ENCODE measurements at regions of chr10 and their contacts with region 1.

Region 1: DNA sequence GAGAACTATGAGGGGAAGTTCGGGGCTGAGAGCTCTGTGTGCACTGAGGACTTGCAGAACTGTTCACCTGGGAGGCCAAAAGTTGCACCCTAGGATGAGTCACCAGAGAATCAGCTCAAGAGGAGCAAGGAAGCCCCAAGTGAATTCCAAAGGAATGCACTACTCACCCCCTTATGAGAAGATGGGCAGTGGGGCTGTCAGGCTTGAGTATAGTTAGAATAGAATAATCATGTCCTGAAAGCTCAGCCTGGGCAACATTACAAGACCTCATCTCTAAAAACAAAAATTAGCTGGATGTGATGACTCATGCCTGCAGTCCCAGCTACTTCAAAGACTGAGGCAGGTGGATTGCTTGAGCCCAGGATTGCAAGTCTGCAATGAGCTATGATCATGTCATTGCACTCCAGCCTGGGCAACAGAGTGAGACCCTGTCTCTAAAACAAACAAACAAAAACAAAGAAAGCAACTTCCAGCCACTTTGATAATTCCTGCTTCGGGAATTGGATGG is 30.0 kb downstream of the MAP3K8 start:
- DNase-seq: no peak
- H3K4me3 ChIP-seq: no peak overlapping the region
- H3K27ac ChIP-seq: no peak overlapping the region
- H3K4me1 ChIP-seq: no peaks in the 10 kb centered on the region
- H3K27me3 ChIP-seq: no peaks in the 10 kb centered on the region
- CTCF ChIP-seq: no peak
- POLR2A ChIP-seq: no peak

Region 2: GRCh38 chr10:30422981-30423654 is 40.9 kb before region 1 on chr10:
- intact Hi-C with region 1: loop called (anchors 5 kb)
- DNase-seq: peak; percentile 29
- H3K4me3 ChIP-seq: no peak overlapping the region
- H3K27ac ChIP-seq: peak overlapping the region in 1 of 2 donors; percentile 10
- H3K4me1 ChIP-seq: no peaks in the 10 kb centered on the region
- H3K27me3 ChIP-seq: no peaks in the 10 kb centered on the region
- CTCF ChIP-seq: no peak
- POLR2A ChIP-seq: no peak

Measured in prostate gland (tissue), 2 donors.